ENCODE measurements at regions of chr11 and their contacts with region 1.

Region 1: GRCh38 chr11:84384731-84385130 is 1098.6 kb upstream of the CCDC90B start:
- DNase-seq: peak in 1 of 2 donors; percentile 16
- ATAC-seq: no peak
- H3K4me3 ChIP-seq: no peak overlapping the region
- H3K27ac ChIP-seq: no peak overlapping the region
- H3K4me1 ChIP-seq: no peaks in the 10 kb centered on the region
- H3K27me3 ChIP-seq: no peaks in the 10 kb centered on the region
- CTCF ChIP-seq: peak; percentile 70

Region 2: GRCh38 chr11:84212468-84213390 is 172.0 kb before region 1 on chr11:
- intact Hi-C with region 1: loop called in 1 of 2 experiments (anchors 5 kb)
- DNase-seq: no peak
- ATAC-seq: no peak
- H3K4me3 ChIP-seq: no peak overlapping the region
- H3K27ac ChIP-seq: no peak overlapping the region
- H3K4me1 ChIP-seq: no peaks in the 10 kb centered on the region
- H3K27me3 ChIP-seq: no peaks in the 10 kb centered on the region
- CTCF ChIP-seq: no peak

Region 3: DNA sequence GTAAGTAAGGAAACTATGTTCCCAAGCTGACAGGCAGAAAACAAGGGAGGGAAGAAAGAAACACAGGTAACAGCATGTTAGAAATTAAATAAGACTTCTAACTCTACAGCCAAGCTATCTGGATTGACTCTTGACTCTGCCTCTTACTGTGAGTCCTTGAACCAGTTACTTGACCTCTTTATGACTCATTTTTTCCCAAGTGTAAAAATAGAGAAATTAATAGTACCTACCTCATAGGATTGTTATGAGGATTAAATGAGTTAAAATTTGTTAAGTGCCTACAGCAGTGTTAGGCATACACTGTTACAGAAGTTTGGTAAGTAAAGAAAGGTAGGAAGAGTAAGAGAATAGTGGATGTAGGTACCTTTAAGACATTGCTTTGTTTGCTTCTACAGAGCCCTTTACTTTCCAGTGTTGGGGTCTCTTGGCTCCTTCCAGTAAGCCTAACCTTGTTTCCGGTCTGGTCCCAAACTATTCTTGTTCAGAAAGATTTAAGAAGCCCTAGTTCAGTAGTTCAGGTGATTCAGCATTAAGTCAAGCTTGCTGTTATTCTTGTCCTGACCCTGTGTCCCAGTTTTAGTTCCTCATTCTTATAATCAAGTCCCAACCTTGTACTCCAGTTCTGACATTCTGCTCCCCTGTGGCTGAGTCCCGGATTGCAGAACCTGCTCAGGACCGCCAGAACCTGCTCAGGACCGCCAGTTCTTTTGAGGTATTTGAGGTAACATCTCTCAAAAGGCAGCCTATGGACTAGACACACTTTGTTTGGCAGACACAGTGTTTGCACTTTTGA is 135.2 kb before region 1 on chr11:
- intact Hi-C with region 1: no loop called
- DNase-seq: no peak
- ATAC-seq: no peak
- H3K4me3 ChIP-seq: no peak overlapping the region
- H3K27ac ChIP-seq: no peak overlapping the region
- H3K4me1 ChIP-seq: no peaks in the 10 kb centered on the region
- H3K27me3 ChIP-seq: no peaks in the 10 kb centered on the region
- CTCF ChIP-seq: no peak

Region 4: GRCh38 chr11:84358034-84358433 is 26.7 kb before region 1 on chr11:
- intact Hi-C with region 1: no loop called
- DNase-seq: no peak
- ATAC-seq: no peak
- H3K4me3 ChIP-seq: no peak overlapping the region
- H3K27ac ChIP-seq: no peak overlapping the region
- H3K4me1 ChIP-seq: no peaks in the 10 kb centered on the region
- H3K27me3 ChIP-seq: no peaks in the 10 kb centered on the region
- CTCF ChIP-seq: no peak

Region 5: DNA sequence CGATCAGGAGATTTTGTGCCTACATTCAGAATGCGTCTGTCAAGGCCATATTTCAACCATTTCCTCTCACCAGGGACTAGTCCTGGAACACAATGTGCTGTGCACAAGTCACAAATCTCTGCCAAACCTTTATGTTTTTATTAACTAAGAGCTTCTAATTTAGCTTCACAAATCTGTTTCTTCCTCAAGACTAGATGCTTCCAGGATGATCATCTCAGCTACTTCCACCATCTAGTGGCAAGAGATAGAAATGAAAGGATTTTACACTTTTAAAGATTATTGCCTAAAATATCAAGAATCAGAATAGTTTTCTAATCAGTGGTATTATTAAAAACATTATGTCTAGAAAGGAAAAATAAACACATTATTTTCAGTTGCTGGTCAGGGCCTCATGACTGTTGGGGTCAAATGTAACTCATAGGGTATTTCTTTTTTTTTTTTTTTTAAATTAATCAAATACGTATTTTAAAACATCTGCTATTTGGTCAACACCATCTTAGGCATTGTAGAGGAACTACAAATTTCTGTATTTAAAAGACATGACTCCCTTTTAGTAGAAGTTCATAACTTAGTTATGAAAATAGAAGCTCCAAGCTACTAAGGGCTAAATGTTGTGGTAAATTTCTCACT is 139.8 kb after region 1 on chr11:
- intact Hi-C with region 1: loop called in 1 of 2 experiments (anchors 10 kb)
- DNase-seq: no peak
- ATAC-seq: no peak
- H3K4me3 ChIP-seq: no peak overlapping the region
- H3K27ac ChIP-seq: no peak overlapping the region
- H3K4me1 ChIP-seq: no peaks in the 10 kb centered on the region
- H3K27me3 ChIP-seq: no peaks in the 10 kb centered on the region
- CTCF ChIP-seq: peak; percentile 29

Region 6: DNA sequence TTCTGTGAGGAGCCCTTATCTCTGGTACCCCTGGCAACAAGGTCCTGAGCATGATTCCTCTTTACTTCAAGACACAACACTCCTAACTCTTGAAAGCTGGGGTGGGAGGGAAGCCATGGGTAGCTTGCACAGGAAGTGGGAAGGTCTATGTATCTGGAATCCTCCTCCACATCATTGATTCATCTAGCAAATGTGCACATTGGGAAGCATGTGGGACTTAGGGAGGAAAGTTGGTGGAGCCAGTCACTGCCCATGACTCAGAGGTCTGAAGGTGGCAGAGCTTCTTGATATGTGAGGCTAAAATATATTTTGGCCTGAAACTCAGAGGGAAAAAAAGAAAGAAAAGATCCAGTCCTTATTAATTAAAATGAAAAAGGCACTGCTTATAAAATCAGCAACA is 241.5 kb after region 1 on chr11:
- intact Hi-C with region 1: no loop called
- DNase-seq: no peak
- ATAC-seq: no peak
- H3K4me3 ChIP-seq: no peak overlapping the region
- H3K27ac ChIP-seq: no peak overlapping the region
- H3K4me1 ChIP-seq: no peaks in the 10 kb centered on the region
- H3K27me3 ChIP-seq: no peaks in the 10 kb centered on the region
- CTCF ChIP-seq: no peak

Region 7: GRCh38 chr11:84714316-84714780 is 329.6 kb after region 1 on chr11:
- intact Hi-C with region 1: loop called in 1 of 2 experiments (anchors 10 kb)
- DNase-seq: peak; percentile 37 to 59
- ATAC-seq: peak in 3 of 4 donors; percentile 70 to 88 (median 80)
- H3K4me3 ChIP-seq: no peak overlapping the region
- H3K27ac ChIP-seq: no peak overlapping the region
- H3K4me1 ChIP-seq: no peaks in the 10 kb centered on the region
- H3K27me3 ChIP-seq: no peaks in the 10 kb centered on the region
- CTCF ChIP-seq: peak; percentile 61

Region 8: DNA sequence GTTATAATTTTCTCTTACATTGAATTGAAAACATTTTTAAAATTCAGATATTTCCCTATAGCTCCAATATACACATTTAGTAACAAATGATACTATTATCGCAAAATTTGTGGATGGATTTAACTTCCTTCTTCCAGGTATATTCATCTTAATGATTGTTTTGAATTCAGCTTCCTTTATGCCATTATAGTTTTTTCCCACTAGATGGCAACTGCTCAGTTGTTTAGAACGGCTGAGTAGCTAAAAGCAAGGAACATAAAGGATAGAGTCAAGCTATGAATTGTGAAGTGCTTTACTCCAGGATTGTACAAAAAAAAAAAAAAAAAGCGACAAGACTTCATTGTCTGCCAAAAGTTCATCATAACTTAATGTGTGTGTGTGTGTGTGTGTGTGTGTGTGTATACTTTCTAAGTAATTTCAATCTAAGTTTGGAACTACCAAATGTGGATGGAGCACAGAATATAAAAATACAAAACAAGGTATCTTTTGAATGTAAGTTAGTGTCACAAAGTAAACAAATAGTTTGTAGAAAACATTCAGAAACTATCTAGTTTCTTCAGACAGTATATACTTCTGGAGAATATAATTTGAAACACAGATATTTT is 396.1 kb after region 1 on chr11:
- intact Hi-C with region 1: no loop called
- DNase-seq: no peak
- ATAC-seq: no peak
- H3K4me3 ChIP-seq: no peak overlapping the region
- H3K27ac ChIP-seq: no peak overlapping the region
- H3K4me1 ChIP-seq: no peaks in the 10 kb centered on the region
- H3K27me3 ChIP-seq: no peaks in the 10 kb centered on the region
- CTCF ChIP-seq: peak; percentile 49

Measured in psoas muscle (tissue), 8 donors.